PC-3 (cell line): ENCODE measurements at regions of chr9 and their contacts with region 1.

Region 1: DNA sequence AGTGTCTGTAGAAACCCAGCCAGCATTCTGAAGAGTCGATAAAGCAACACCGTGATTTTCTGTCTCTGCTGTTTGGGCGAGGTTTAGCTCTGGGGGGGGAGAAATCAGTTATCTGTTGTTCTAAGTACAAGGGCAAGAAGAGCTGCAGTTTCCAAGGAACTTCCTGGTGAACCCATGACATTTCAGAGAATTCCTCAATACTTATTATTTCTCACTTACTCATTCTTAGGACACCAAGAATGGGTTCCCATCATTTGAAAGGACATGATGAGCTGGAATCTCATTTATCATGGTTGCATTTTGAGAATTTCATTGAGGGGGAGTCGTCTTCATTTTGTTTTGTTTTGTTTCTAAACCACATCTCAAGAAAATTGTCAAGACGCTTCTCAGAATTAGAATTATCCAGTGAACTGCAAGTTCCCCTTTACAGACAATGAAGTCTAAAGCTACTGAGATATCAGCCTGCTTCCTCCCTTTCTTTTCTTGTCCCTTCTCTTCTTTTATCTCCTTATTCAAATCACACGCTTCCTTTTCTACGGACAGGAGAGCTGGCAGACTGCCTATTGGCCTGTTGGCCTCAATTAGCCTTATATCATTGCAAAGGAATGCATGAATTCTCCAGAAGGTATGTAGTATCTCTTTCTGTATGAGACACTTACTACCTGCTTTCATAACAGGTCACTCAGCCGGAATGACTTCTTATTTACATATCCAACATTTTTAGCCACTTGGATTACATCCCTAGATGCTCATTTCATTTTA is 53.7 kb downstream of the ZNF462 start:
- DNase-seq: peak; percentile 96
- ATAC-seq: peak; percentile 83
- H3K4me3 ChIP-seq: peak overlapping the region; percentile 16; the same call in 1 of the 2 replicates
- H3K27ac ChIP-seq: peak overlapping the region; percentile 63
- H3K4me1 ChIP-seq: peaks cover 47% of the 10 kb centered on the region
- H3K27me3 ChIP-seq: no peaks in the 10 kb centered on the region
- CTCF ChIP-seq: no peak

Region 2: GRCh38 chr9:106892632-106893031 is 24.0 kb before region 1 on chr9:
- CTCF ChIA-PET with region 1: no interaction called
- POLR2A ChIA-PET with region 1: no interaction called
- intact Hi-C with region 1: loop called (anchors 2 kb)
- DNase-seq: peak; percentile 97
- ATAC-seq: peak; percentile 98
- H3K4me3 ChIP-seq: peak overlapping the region; percentile 34; the same call in 1 of the 2 replicates
- H3K27ac ChIP-seq: peak overlapping the region; percentile 98
- H3K4me1 ChIP-seq: peaks cover 51% of the 10 kb centered on the region
- H3K27me3 ChIP-seq: no peaks in the 10 kb centered on the region
- CTCF ChIP-seq: no peak

Region 3: GRCh38 chr9:106964822-106965525 is 48.3 kb after region 1 on chr9:
- CTCF ChIA-PET with region 1: no interaction called
- POLR2A ChIA-PET with region 1: no interaction called
- intact Hi-C with region 1: loop called (anchors 1 kb)
- DNase-seq: peak; percentile 72
- ATAC-seq: peak; percentile 46
- H3K4me3 ChIP-seq: peak overlapping the region; percentile 49; the same call in 1 of the 2 replicates
- H3K27ac ChIP-seq: peak overlapping the region; percentile 93
- H3K4me1 ChIP-seq: peaks cover 55% of the 10 kb centered on the region
- H3K27me3 ChIP-seq: no peaks in the 10 kb centered on the region
- CTCF ChIP-seq: no peak